CD14-positive monocyte (primary cell): ENCODE measurements at regions of chr17 and their contacts with region 1.

Region 1: DNA sequence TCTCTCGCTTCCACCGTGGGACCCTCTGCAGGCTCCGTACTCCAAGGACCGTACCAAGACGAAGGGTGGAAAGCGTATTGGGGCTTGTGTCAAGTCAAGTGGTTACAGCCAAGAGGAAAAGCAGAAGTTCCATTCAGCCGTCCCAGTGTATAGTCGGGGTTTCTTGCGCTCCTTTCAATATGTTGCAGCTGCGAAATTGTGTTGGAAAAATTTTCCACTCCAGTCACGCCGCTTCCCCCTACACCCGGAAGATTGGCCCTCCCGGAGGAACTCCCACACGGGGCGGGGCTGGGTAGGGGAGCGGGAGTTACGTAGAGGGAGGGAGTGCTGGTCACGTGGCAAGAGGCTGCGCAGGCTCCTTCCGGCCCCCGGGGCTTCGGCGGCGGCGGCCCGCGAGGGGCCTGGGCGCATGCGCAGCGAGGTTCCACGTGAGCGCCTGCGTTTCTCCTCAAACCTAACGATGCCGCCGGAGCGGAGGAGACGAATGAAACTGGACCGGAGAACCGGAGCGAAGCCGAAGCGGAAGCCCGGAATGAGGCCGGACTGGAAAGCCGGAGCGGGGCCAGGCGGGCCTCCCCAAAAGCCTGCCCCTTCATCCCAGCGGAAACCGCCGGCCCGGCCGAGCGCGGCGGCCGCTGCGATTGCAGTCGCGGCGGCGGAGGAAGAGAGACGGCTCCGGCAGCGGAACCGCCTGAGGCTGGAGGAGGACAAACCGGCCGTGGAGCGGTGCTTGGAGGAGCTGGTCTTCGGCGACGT is at the start of gene UTP18:
- DNase-seq: peak; percentile 95 to 98 (median 96)
- H3K4me3 ChIP-seq: peak within 1 kb of the TSS; percentile 84 to 93 (median 93)
- H3K4me3 Mint-ChIP-seq: peak within 1 kb of the TSS; percentile 87 to 93
- H3K27ac ChIP-seq: peak within 1 kb of the TSS; percentile 97 to 99
- H3K27ac Mint-ChIP-seq: peak within 1 kb of the TSS; percentile 96 to 99 (median 98)
- H3K4me1 ChIP-seq: peaks cover 36 to 57% of the 10 kb centered on the region in 2 donors
- H3K4me1 Mint-ChIP-seq: peaks cover 47% of the 10 kb centered on the region
- H3K27me3 ChIP-seq: no peaks in the 10 kb centered on the region
- H3K27me3 Mint-ChIP-seq: peaks cover 0 to 2% (median 1%) of the 10 kb centered on the region in 3 donors
- CTCF ChIP-seq: no peak
- polyA plus RNA-seq, gene UTP18: 13.0 to 31.9 (median 31.6) TPM

Region 2: DNA sequence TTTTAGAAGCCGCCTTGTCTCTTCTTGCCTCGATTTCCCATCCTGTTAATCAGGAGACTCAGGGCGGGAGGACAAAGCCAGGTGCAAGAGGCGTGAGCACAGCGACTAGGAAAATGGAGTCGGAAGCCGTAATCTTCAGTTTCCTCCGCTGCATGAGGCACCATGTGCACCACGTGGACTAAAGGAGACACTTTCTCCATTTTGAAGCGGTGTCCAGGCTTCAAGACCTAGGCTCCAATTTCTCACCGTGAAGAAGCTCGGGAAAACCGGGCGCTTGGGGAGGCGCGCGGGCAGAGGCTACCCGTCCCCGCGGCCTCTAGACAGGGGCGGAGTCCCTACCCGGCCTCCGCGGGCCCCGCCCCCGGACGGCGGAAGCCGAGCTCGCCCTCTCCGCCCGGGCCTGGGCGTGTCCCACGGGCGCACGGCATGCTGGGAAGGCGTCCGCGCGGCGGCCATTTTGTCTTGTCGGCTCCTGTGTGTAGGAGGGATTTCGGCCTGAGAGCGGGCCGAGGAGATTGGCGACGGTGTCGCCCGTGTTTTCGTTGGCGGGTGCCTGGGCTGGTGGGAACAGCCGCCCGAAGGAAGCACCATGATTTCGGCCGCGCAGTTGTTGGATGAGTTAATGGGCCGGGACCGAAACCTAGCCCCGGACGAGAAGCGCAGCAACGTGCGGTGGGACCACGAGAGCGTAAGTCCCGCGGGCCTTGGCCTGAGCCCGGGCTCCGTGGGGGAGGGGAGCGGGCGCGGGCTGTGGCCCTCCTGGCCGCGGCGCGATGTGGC is 541.0 kb before region 1 on chr17 and contains the start of gene LUC7L3:
- intact Hi-C with region 1: loop called in 1 of 2 experiments (anchors 5 kb)
- DNase-seq: peak; percentile 88 to 91 (median 89)
- H3K4me3 ChIP-seq: peak within 1 kb of the TSS; percentile 68 to 91 (median 90)
- H3K4me3 Mint-ChIP-seq: peak within 1 kb of the TSS; percentile 96 to 97
- H3K27ac ChIP-seq: peak within 1 kb of the TSS; percentile 97
- H3K27ac Mint-ChIP-seq: peak within 1 kb of the TSS; percentile 98 to 100 (median 99)
- H3K4me1 ChIP-seq: peaks cover 49 to 69% of the 10 kb centered on the region in 2 donors
- H3K4me1 Mint-ChIP-seq: peaks cover 56% of the 10 kb centered on the region
- H3K27me3 ChIP-seq: no peaks in the 10 kb centered on the region
- H3K27me3 Mint-ChIP-seq: no peaks in the 10 kb centered on the region
- CTCF ChIP-seq: no peak
- polyA plus RNA-seq, gene LUC7L3: 14.6 to 49.8 (median 17.1) TPM

Region 3: DNA sequence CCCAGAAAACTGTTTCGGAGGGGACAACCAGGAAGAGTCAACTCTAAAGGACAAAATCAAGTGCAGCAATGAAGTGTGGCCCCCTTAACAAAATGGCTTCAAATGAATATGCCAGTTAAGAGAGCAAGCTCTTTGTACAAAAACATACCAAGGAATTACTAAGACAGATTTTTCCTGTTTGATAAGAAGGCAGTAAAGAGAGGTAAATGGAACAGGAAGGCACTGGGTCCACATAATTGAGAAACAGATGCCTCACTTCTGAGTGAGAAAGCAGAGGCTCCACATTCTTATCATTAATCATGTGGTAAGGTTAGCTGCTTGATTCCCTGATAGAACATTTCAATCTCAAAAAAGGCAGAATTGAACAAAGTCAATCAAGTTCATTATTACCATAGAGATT is 45.4 kb before region 1 on chr17:
- intact Hi-C with region 1: no loop called
- DNase-seq: no peak
- H3K4me3 ChIP-seq: no peak overlapping the region
- H3K4me3 Mint-ChIP-seq: no peak overlapping the region
- H3K27ac ChIP-seq: no peak overlapping the region
- H3K27ac Mint-ChIP-seq: peak overlapping the region in 1 of 7 donors; percentile 54
- H3K4me1 ChIP-seq: no peaks in the 10 kb centered on the region
- H3K4me1 Mint-ChIP-seq: no peaks in the 10 kb centered on the region
- H3K27me3 ChIP-seq: no peaks in the 10 kb centered on the region
- H3K27me3 Mint-ChIP-seq: no peaks in the 10 kb centered on the region
- CTCF ChIP-seq: no peak